ENCODE measurements at regions of chr21 and their contacts with region 1.

Region 1: DNA sequence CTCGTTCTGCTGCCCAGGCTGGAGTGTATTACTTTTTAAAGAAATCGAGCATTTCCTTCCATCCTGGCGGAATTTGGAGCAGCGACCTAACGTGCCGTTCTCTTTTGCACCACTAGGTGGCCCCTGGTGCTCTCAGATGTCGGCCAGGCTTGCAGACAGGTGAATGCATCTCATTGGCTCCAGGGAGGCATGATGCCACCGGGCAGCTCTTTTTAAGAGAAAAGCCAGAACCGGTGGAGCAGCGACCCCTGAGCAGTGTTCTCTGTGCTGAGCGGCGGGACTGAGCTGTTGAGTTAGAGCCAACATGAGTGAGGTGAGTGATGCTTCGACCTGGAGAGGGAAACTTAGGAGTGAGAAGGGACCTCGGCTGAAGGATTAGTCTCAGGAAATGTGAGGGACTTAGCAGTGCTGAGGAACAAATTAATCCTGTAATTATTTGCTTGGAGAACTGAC is at the start of gene PCP4:
- DNase-seq: peak; percentile 64
- H3K4me3 Mint-ChIP-seq: no peak within 1 kb of the TSS
- H3K27ac Mint-ChIP-seq: no peak within 1 kb of the TSS
- H3K4me1 Mint-ChIP-seq: peaks cover 13% of the 10 kb centered on the region
- H3K27me3 Mint-ChIP-seq: peaks cover 42% of the 10 kb centered on the region
- CTCF ChIP-seq: peak; percentile 60
- total RNA-seq, gene PCP4: not detected in 2 replicates

Region 2: GRCh38 chr21:39788383-39788782 is 78.8 kb before region 1 on chr21:
- CTCF ChIA-PET with region 1: interaction called, 3 read pairs
- intact Hi-C with region 1: loop called (anchors 2 kb)
- DNase-seq: peak; percentile 73
- H3K4me3 Mint-ChIP-seq: no peak overlapping the region
- H3K27ac Mint-ChIP-seq: no peak overlapping the region
- H3K4me1 Mint-ChIP-seq: no peaks in the 10 kb centered on the region
- H3K27me3 Mint-ChIP-seq: peaks cover 16% of the 10 kb centered on the region
- CTCF ChIP-seq: peak; percentile 55

Region 3: GRCh38 chr21:39885119-39885848 is 18.1 kb after region 1 on chr21:
- CTCF ChIA-PET with region 1: no interaction called
- intact Hi-C with region 1: no loop called
- DNase-seq: no peak
- H3K4me3 Mint-ChIP-seq: no peak overlapping the region
- H3K27ac Mint-ChIP-seq: no peak overlapping the region
- H3K4me1 Mint-ChIP-seq: no peaks in the 10 kb centered on the region
- H3K27me3 Mint-ChIP-seq: peaks cover 12% of the 10 kb centered on the region
- CTCF ChIP-seq: no peak

Region 4: DNA sequence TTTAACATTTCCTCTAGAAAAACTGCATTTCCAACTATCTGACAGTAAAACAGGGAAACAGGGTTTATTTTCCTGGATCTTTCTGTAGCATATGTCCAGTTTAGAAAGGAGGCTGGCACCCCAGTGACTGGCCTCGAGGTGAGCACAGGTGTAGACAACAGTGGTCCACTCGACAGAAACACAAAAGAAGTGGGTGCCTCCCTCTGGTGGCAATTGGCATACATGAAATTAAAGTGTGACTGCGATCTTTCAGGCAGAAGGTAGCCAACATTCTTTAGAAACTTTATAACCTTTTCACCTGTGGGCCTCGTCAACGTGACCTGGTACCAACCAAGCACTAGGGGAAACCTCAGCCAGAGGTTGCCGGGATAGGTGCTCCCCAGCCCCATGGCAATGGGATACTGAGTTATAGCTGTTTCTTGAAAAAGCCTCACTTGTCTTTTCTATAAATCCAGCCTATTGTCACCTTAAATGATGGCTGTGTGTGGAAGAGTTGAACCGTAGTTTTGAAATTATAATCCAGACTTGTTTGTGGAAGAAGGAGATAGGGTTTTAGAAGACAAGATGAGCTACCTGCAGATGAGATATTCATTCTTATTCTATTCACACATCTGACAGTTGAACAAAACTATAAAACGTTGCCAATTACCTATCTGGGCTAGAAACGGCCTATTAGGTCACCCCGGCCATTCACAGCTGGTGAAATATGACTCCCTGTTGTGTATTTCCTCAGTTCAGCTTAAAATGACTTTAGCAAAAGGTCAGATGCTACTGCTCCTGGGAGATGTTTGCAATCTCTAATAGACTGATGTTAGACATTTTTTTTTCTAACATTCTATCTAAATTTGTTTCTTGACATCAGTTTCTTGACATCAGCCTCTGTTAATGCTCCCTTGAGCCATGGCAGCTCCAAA is 44.3 kb after region 1 on chr21:
- CTCF ChIA-PET with region 1: no interaction called
- intact Hi-C with region 1: loop called (anchors 5 kb)
- DNase-seq: peak; percentile 21
- H3K4me3 Mint-ChIP-seq: no peak overlapping the region
- H3K27ac Mint-ChIP-seq: no peak overlapping the region
- H3K4me1 Mint-ChIP-seq: no peaks in the 10 kb centered on the region
- H3K27me3 Mint-ChIP-seq: peaks cover 44% of the 10 kb centered on the region
- CTCF ChIP-seq: no peak

Region 5: DNA sequence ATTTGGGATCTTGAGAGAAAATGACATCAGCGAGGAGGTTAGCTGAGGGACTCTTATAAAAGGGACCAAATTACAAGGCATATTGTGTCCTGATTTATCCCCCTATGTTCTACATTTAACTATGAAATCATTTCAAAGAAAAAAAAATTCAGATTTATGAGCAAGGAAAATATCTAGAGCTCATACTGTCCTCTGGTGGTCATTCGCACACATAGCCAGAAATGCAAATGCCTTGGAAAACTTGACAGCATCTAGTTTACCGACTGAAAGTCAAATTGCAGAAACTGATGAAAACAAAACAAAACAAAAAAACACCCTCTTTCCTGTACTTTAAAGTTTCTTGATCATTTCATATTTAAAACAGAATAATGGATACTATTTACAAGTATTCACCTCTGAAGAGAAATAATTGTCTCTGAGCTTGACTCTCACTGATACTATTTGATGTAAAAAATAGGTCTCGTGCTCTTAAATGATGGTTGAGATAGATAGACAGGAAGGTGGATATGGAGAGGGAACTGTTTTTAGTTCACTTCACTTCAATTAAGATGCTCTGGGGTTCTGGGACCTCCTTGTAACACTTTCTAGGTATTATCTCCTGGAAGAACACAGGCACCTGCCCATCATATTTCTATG is 253.8 kb after region 1 on chr21:
- CTCF ChIA-PET with region 1: interaction called, 4 read pairs
- intact Hi-C with region 1: loop called (anchors 5 kb)
- DNase-seq: no peak
- H3K4me3 Mint-ChIP-seq: no peak overlapping the region
- H3K27ac Mint-ChIP-seq: no peak overlapping the region
- H3K4me1 Mint-ChIP-seq: no peaks in the 10 kb centered on the region
- H3K27me3 Mint-ChIP-seq: no peaks in the 10 kb centered on the region
- CTCF ChIP-seq: peak; percentile 32